ENCODE measurements at regions of chr9 and their contacts with region 1.

Region 1: DNA sequence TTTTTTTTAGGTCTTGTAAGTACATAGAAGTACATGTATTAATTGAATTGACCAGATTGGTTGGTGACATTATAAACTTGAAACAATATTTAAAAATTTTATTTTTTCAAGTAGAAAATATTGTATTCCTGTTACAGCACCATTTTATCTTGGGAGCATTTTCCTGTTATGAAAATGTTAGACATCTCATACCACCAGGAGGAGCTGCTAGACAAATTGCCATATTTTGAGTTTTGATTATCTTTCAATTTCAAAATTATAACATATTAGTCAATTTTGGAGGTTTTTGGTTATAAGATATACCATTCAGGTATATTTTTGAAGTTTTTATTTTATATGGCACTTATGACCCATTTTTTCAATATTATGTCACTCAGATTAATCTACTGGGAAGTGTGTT is 84.4 kb downstream of the CNTLN start:
- DNase-seq: no peak
- H3K4me3 ChIP-seq: no peak overlapping the region
- H3K4me3 Mint-ChIP-seq: no peak overlapping the region
- H3K27ac Mint-ChIP-seq: no peak overlapping the region
- H3K4me1 ChIP-seq: no peaks in the 10 kb centered on the region
- H3K4me1 Mint-ChIP-seq: no peaks in the 10 kb centered on the region
- H3K27me3 ChIP-seq: no peaks in the 10 kb centered on the region
- H3K27me3 Mint-ChIP-seq: no peaks in the 10 kb centered on the region
- CTCF ChIP-seq: peak in 1 of 2 experiments; percentile 32

Region 2: GRCh38 chr9:17462869-17463464 is 243.7 kb after region 1 on chr9:
- CTCF ChIA-PET with region 1: no interaction called
- POLR2A ChIA-PET with region 1: no interaction called
- intact Hi-C with region 1: loop called (anchors 2 kb)
- DNase-seq: peak in 1 of 2 experiments; percentile 32
- H3K4me3 ChIP-seq: no peak overlapping the region
- H3K4me3 Mint-ChIP-seq: no peak overlapping the region
- H3K27ac Mint-ChIP-seq: no peak overlapping the region
- H3K4me1 ChIP-seq: no peaks in the 10 kb centered on the region
- H3K4me1 Mint-ChIP-seq: no peaks in the 10 kb centered on the region
- H3K27me3 ChIP-seq: no peaks in the 10 kb centered on the region
- H3K27me3 Mint-ChIP-seq: no peaks in the 10 kb centered on the region
- CTCF ChIP-seq: peak; percentile 42 to 54